ENCODE measurements at regions of chr7 and their contacts with region 1.

Region 1: DNA sequence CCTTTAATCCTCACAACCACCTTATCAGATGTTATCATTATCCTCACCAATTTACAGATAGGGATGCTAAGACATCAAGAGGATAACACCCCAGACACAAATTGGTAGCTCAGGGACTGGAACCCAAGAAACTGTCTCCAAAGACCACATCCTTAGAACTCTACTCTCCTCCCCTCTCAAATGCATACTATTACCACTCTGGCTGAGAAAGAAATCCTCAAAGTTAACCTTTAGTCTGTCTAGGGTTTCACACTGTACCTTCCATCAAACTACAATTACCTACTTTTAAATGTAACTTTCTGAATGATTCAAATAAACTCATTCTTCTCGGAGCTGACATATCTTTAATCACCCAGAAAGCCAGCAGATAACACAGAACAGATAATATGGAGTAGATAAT is 6.6 kb downstream of the EZH2 start:
- DNase-seq: no peak

Region 2: GRCh38 chr7:148903504-148903903 is 26.0 kb after region 1 on chr7:
- intact Hi-C with region 1: loop called in 1 of 2 experiments (anchors 1 kb)
- DNase-seq: no peak

Region 3: DNA sequence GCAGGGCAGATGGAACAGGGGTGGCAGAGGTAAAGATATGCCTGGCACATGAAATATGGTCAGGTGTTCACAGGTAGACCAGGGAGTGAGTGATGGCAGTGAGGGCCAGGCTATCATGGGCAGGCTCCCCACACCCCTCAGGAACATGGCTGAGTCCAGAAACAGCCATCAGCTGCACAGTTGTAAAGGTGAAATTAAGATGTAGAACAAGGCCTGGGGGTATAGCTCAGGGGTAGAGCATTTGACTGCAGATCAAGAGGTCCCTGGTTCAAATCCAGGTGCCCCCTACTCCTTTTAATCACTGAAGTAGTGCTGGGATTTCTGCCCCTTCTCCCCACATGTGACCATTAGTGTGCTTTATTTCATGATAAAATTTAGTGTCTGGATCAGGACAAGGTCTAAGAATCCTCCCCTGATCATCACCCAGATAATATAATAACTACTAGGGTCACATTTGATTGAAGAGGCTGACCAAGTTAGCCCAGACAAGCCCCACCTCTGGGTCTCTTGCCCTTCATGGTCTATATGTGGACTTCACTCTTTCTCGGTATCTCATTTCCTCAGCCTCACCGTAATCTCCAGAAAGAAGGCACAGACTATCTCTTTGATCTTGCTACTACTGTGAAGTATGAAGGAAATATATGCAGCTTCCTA is 453.5 kb after region 1 on chr7:
- intact Hi-C with region 1: no loop called
- DNase-seq: no peak